B cell (primary cell): ENCODE measurements at regions of chr16 and their contacts with region 1.

Region 1: GRCh38 chr16:3305109-3306068 is at the starts of genes TIGD7 and ZNF75A:
- DNase-seq: peak; percentile 94
- ATAC-seq: peak; percentile 89
- H3K4me3 ChIP-seq: peak within 1 kb of the TSS; percentile 71 to 86 (median 78)
- H3K4me3 Mint-ChIP-seq: peak within 1 kb of the TSS; percentile 88
- H3K27ac ChIP-seq: peak within 1 kb of the TSS; percentile 82 to 93
- H3K27ac Mint-ChIP-seq: peak within 1 kb of the TSS; percentile 89
- H3K4me1 ChIP-seq: peaks cover 8 to 14% of the 10 kb centered on the region in 2 donors
- H3K4me1 Mint-ChIP-seq: peaks cover 21% of the 10 kb centered on the region
- H3K27me3 ChIP-seq: no peaks in the 10 kb centered on the region
- H3K27me3 Mint-ChIP-seq: no peaks in the 10 kb centered on the region
- CTCF ChIP-seq: no peak
- total RNA-seq, gene TIGD7: 12.8 and 15.7 TPM in 2 replicates
- total RNA-seq, gene ZNF75A: 111 and 118 TPM in 2 replicates

Region 2: DNA sequence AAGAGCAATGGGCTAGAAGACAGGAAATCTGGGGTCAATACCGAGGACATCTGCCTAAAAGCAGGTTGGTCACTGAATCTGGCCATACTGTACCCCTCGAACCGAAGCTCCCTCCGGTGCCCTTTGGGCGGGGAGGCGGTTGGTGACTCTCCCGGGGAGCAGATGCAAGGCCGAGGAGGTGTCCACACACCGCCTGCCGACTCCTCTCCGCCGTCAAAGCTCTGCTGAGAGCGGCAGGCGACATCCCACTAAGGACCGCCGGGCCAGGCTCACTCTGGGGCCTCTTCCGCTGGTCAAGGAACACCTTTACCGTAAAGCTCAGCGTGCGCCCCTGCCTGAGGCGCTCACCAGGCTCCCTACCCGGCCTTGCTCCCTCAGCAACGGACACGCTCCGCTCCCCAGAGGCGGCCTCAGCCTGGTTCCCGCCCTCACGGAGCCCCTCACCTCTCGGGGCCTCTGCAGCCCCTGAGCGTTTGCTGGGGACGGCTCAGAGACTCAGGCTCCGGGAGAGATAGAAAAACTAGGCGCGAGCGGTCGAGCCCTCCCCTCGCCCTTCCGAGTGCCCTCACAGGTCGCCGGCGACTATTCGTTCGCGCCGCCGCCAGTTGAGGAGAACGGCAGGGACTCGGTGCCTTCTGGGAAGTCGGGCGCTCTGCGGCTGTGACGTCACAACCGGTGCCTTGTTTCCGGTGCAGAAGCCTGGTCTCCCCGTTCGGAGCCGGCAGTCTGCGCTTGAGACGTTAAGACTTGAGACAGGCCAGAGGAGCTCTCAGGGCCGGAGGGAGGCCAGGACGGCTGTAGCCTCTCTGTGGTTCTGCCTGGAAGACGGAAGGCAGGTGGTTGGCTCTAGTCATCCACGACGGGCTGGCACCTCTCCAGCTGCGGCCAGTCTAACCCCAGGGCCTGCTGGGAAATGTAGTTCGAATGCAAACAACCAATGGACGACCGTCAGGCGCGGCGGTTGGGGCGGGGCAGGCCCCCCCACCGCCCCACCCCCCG is 70.5 kb before region 1 on chr16 and contains the start of gene ZNF200:
- CTCF ChIA-PET with region 1: no interaction called
- POLR2A ChIA-PET with region 1: no interaction called
- intact Hi-C with region 1: loop called (anchors 1 kb)
- DNase-seq: peak; percentile 98
- ATAC-seq: peak; percentile 85
- H3K4me3 ChIP-seq: peak within 1 kb of the TSS; percentile 75 to 95 (median 95)
- H3K4me3 Mint-ChIP-seq: peak within 1 kb of the TSS; percentile 94
- H3K27ac ChIP-seq: peak within 1 kb of the TSS; percentile 96
- H3K27ac Mint-ChIP-seq: peak within 1 kb of the TSS; percentile 97
- H3K4me1 ChIP-seq: peaks cover 12 to 16% of the 10 kb centered on the region in 2 donors
- H3K4me1 Mint-ChIP-seq: peaks cover 23% of the 10 kb centered on the region
- H3K27me3 ChIP-seq: no peaks in the 10 kb centered on the region
- H3K27me3 Mint-ChIP-seq: no peaks in the 10 kb centered on the region
- CTCF ChIP-seq: no peak
- total RNA-seq, gene ZNF200: 16.1 and 20.1 TPM in 2 replicates

Region 3: GRCh38 chr16:3246876-3247275 is 58.5 kb before region 1 on chr16:
- CTCF ChIA-PET with region 1: no interaction called
- POLR2A ChIA-PET with region 1: no interaction called
- intact Hi-C with region 1: no loop called
- DNase-seq: no peak
- ATAC-seq: no peak
- H3K4me3 ChIP-seq: no peak overlapping the region
- H3K4me3 Mint-ChIP-seq: no peak overlapping the region
- H3K27ac ChIP-seq: no peak overlapping the region
- H3K27ac Mint-ChIP-seq: no peak overlapping the region
- H3K4me1 ChIP-seq: no peaks in the 10 kb centered on the region
- H3K4me1 Mint-ChIP-seq: no peaks in the 10 kb centered on the region
- H3K27me3 ChIP-seq: peaks cover 0 to 21% (median 0%) of the 10 kb centered on the region in 4 experiments
- H3K27me3 Mint-ChIP-seq: peaks cover 40% of the 10 kb centered on the region
- CTCF ChIP-seq: no peak

Region 4: GRCh38 chr16:3264137-3265036 is 41.0 kb before region 1 on chr16:
- CTCF ChIA-PET with region 1: interaction called, 3 read pairs
- POLR2A ChIA-PET with region 1: interaction called, 5 read pairs
- intact Hi-C with region 1: loop called (anchors 1 kb)
- DNase-seq: peak; percentile 97
- ATAC-seq: peak; percentile 86
- H3K4me3 ChIP-seq: peak overlapping the region; percentile 75 to 84 (median 78)
- H3K4me3 Mint-ChIP-seq: peak overlapping the region; percentile 92
- H3K27ac ChIP-seq: peak overlapping the region; percentile 85 to 86
- H3K27ac Mint-ChIP-seq: peak overlapping the region; percentile 95
- H3K4me1 ChIP-seq: peaks cover 9 to 18% of the 10 kb centered on the region in 2 donors
- H3K4me1 Mint-ChIP-seq: peaks cover 28% of the 10 kb centered on the region
- H3K27me3 ChIP-seq: no peaks in the 10 kb centered on the region
- H3K27me3 Mint-ChIP-seq: no peaks in the 10 kb centered on the region
- CTCF ChIP-seq: peak; percentile 54

Region 5: DNA sequence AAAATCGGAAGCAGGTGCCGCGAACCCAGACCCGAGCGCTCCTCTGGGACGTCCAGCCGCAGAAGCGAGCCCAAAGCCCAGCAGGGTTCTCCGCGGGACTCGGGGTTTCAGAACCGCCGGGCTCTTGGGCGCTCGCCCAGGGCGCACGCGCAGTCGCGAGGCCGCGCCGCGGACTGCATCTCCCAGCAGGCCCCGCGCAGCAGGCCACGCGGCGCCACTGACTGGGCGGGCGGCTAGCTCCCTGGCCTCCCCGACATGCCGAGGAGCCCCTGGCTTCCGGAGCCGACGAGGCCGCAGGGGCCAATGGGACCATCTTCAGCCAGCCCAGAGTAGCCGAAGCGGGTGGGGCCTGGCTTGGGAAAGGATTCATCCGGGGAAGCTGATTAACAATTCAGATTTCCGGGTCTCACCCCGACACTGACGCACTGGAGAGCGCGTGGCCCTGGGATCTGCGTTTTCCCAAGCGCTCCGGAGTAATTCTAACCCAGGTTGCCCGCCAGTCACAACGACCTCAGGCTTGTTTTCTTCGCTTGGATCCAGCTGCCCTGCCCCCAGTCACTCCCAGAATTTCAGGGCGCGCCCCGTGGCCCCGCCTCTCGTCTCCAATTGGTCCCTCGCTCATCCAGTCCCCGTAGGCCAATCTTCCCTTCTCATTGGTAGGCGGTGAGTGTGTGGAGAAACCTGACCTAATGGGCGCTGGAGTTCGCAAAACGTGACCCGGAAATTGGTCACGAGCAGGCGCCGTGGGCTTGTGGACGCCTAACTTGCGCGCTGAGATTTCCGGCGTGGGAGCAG is 22.5 kb before region 1 on chr16 and contains the start of gene ZNF263:
- CTCF ChIA-PET with region 1: interaction called, 3 read pairs
- POLR2A ChIA-PET with region 1: interaction called, 18 read pairs
- intact Hi-C with region 1: loop called (anchors 1 kb)
- DNase-seq: peak; percentile 96
- ATAC-seq: peak; percentile 89
- H3K4me3 ChIP-seq: peak within 1 kb of the TSS; percentile 78 to 100 (median 95)
- H3K4me3 Mint-ChIP-seq: peak within 1 kb of the TSS; percentile 97
- H3K27ac ChIP-seq: peak within 1 kb of the TSS; percentile 97 to 99
- H3K27ac Mint-ChIP-seq: peak within 1 kb of the TSS; percentile 98
- H3K4me1 ChIP-seq: peaks cover 22 to 30% of the 10 kb centered on the region in 2 donors
- H3K4me1 Mint-ChIP-seq: peaks cover 37% of the 10 kb centered on the region
- H3K27me3 ChIP-seq: no peaks in the 10 kb centered on the region
- H3K27me3 Mint-ChIP-seq: no peaks in the 10 kb centered on the region
- CTCF ChIP-seq: no peak
- total RNA-seq, gene ZNF263: 43.0 and 46.0 TPM in 2 replicates

Region 6: DNA sequence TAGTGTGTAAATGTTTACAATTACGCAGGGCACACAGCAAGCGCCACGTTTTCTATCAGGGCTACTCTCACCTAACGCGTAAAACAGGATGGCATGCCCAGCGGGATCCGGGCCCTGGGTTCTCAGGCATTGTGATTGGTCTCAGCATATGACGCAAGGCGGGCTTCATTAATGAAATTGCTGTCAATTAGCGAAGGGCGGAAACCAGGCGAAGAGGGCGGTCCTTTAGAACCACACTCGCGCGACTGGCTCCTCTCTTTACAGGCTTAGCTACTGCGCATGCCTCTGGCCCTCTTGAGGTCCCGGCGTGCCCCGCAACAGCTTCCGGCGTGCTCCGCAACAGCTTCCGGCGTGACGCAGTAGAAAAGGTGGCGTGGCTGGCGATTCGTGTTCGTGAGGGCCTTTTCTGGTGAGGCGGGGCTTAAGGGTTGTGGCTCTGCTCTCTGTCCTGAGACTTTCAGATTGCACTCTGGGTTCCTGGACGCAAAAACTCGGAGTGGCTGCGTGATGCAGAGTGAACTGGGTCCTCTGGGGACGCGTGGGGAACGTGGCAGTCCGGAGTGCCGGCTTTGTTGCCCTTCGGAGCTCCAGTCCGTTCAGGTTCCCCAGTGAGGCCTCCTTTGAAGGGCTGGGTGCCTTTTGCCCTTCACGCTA is 59.5 kb after region 1 on chr16:
- CTCF ChIA-PET with region 1: no interaction called
- POLR2A ChIA-PET with region 1: no interaction called
- intact Hi-C with region 1: loop called (anchors 1 kb)
- DNase-seq: peak; percentile 92
- ATAC-seq: peak; percentile 94
- H3K4me3 ChIP-seq: peak overlapping the region; percentile 34 to 69 (median 64)
- H3K4me3 Mint-ChIP-seq: peak overlapping the region; percentile 85
- H3K27ac ChIP-seq: peak overlapping the region; percentile 88 to 90
- H3K27ac Mint-ChIP-seq: peak overlapping the region; percentile 92
- H3K4me1 ChIP-seq: peaks cover 6 to 15% of the 10 kb centered on the region in 2 donors
- H3K4me1 Mint-ChIP-seq: peaks cover 5% of the 10 kb centered on the region
- H3K27me3 ChIP-seq: peaks cover 0 to 11% (median 3%) of the 10 kb centered on the region in 4 experiments
- H3K27me3 Mint-ChIP-seq: peaks cover 24% of the 10 kb centered on the region
- CTCF ChIP-seq: no peak

Region 7: DNA sequence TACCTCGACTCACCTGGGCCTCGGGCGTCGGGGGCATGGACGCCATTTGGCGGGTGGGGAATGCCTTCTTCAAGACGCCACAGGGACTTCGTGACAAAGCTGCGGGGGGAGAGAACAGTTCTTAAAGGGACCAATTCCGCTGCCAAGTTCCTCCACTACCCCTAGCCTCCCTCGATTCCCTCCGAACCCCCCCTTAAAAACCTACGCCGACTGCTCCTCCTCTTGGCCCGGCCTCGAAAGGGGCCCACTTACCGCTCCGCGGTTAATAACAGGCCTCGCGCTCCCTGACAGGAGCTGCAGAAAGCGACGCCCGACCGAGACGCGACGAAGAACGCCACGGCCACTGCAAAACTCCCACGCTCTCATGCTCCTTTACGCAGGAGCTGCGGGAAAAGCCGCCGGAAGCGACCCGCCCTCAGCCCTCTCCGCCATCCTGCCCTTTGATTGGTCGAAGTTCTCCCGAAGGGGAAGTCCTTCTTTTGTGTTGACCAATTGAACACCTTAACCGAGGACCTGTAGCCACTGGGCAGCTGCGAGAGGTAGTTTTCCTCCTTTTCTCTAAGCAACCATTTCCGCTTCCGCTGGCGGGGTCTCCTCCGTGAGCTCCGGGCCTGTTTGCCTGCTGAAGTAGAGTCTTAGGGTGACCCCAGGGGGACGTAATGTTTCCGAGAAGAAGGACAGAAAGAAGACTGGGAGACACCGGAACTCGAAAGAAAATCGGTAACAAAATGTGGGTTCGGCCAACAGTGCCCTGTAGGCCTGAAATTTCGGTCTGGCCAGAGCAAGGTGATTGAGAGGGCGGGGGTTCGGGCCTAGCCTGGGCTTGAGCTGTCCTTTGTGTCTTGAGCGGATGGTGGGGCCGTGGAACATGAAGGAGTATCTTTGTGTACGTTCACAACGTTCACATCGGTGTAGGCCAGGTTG is 138.0 kb after region 1 on chr16 and contains the starts of genes NAA60 and ZNF597:
- CTCF ChIA-PET with region 1: no interaction called
- POLR2A ChIA-PET with region 1: no interaction called
- intact Hi-C with region 1: loop called (anchors 1 kb)
- DNase-seq: peak; percentile 86
- ATAC-seq: peak; percentile 98
- H3K4me3 ChIP-seq: peak within 1 kb of the TSS; percentile 53 to 79 (median 62)
- H3K4me3 Mint-ChIP-seq: peak within 1 kb of the TSS; percentile 95
- H3K27ac ChIP-seq: peak within 1 kb of the TSS; percentile 34 to 83
- H3K27ac Mint-ChIP-seq: peak within 1 kb of the TSS; percentile 91
- H3K4me1 ChIP-seq: peaks cover 11% of the 10 kb centered on the region in 2 donors
- H3K4me1 Mint-ChIP-seq: peaks cover 21% of the 10 kb centered on the region
- H3K27me3 ChIP-seq: no peaks in the 10 kb centered on the region
- H3K27me3 Mint-ChIP-seq: peaks cover 3% of the 10 kb centered on the region
- CTCF ChIP-seq: no peak
- total RNA-seq, gene NAA60: 50.9 and 52.9 TPM in 2 replicates
- total RNA-seq, gene ZNF597: 4.6 and 5.0 TPM in 2 replicates

Region 8: GRCh38 chr16:3457434-3458252 is 152.3 kb after region 1 on chr16:
- CTCF ChIA-PET with region 1: no interaction called
- POLR2A ChIA-PET with region 1: interaction called, 3 read pairs
- intact Hi-C with region 1: loop called (anchors 1 kb)
- DNase-seq: peak; percentile 96
- ATAC-seq: peak; percentile 94
- H3K4me3 ChIP-seq: peak overlapping the region; percentile 48 to 86 (median 73)
- H3K4me3 Mint-ChIP-seq: peak overlapping the region; percentile 84
- H3K27ac ChIP-seq: peak overlapping the region; percentile 87 to 95
- H3K27ac Mint-ChIP-seq: peak overlapping the region; percentile 90
- H3K4me1 ChIP-seq: peaks cover 28 to 39% of the 10 kb centered on the region in 2 donors
- H3K4me1 Mint-ChIP-seq: peaks cover 50% of the 10 kb centered on the region
- H3K27me3 ChIP-seq: no peaks in the 10 kb centered on the region
- H3K27me3 Mint-ChIP-seq: no peaks in the 10 kb centered on the region
- CTCF ChIP-seq: peak; percentile 63